A549 (cell line): ENCODE measurements at regions of chr17 and their contacts with region 1.

Region 1: DNA sequence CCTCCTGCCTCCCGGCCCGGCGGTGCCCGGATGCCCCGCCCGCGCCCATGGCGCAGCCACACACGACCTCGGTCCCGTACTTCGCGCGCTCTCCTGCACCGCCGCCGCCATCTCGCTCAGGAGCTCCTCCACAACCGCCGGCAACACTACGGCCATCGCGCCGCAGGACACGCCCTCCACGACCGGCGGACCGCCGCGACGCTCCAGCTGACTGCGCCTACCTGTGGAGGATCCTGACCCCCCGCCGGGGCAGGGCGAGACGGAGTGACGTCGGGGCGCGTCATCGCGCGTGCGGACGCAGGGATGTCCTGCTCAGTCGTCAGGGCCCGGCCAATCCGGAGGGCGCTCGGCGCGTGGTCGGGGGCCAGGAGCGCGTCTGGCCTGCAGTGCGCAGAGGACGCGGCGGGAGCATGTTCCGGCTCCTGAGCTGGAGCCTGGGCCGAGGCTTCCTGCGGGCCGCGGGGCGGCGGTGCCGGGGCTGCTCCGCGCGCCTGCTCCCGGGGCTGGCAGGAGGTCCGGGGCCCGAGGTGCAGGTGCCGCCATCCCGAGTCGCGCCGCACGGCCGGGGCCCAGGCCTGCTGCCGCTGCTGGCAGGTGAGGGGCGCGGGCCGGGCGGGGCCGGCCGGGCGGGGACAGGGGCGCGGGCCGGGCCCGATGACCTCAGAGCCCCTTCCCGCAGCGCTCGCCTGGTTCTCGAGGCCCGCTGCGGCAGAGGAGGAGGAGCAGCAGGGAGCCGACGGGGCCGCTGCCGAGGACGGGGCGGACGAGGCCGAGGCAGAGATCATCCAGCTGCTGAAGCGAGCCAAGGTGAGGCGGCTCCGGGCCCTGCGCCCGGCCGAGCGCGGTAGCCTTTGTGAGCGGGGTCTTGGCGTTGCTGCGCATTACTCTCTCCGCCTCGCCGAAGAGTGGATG is at the starts of genes TTC19 and ZSWIM7:
- DNase-seq: peak; percentile 99
- ATAC-seq: peak; percentile 94 to 97
- H3K4me3 ChIP-seq: peak within 1 kb of the TSS; percentile 95
- H3K27ac ChIP-seq: peak within 1 kb of the TSS; percentile 94 to 97
- H3K4me1 ChIP-seq: peaks cover 10% of the 10 kb centered on the region; the same call in 1 of the 3 replicates
- CTCF ChIP-seq: no peak
- EP300 ChIP-seq: no peak
- POLR2A ChIP-seq: peak; percentile 97
- RAD21 ChIP-seq: no peak; a peak in 2 of 5 replicates
- polyA plus RNA-seq, gene TTC19: 16.6 and 23.6 TPM in 2 replicates
- polyA plus RNA-seq, gene ZSWIM7: 65.5 and 72.7 TPM in 2 replicates

Region 2: GRCh38 chr17:15954222-15954621 is 45.5 kb before region 1 on chr17:
- CTCF ChIA-PET with region 1: interaction called, 105 read pairs
- POLR2A ChIA-PET with region 1: interaction called, 15 read pairs
- DNase-seq: peak; percentile 45 to 47
- ATAC-seq: peak in 1 of 2 experiments; percentile 23; a peak in 1 of 6 replicates
- H3K4me3 ChIP-seq: no peak overlapping the region
- H3K27ac ChIP-seq: peak overlapping the region in 1 of 2 experiments; percentile 44; a peak in 2 of 6 replicates
- H3K4me1 ChIP-seq: peaks cover 26% of the 10 kb centered on the region
- CTCF ChIP-seq: no peak
- EP300 ChIP-seq: no peak
- POLR2A ChIP-seq: no peak
- RAD21 ChIP-seq: no peak

Region 3: GRCh38 chr17:15966183-15966878 is 33.4 kb before region 1 on chr17:
- CTCF ChIA-PET with region 1: interaction called, 35 read pairs
- POLR2A ChIA-PET with region 1: interaction called, 3 read pairs
- DNase-seq: no peak
- ATAC-seq: peak in 1 of 2 experiments; percentile 72; a peak in 3 of 6 replicates
- H3K4me3 ChIP-seq: no peak overlapping the region
- H3K27ac ChIP-seq: peak overlapping the region; percentile 37 to 58; a peak in 5 of 6 replicates
- H3K4me1 ChIP-seq: peaks cover 50% of the 10 kb centered on the region
- CTCF ChIP-seq: no peak
- EP300 ChIP-seq: no peak
- POLR2A ChIP-seq: no peak
- RAD21 ChIP-seq: no peak

Region 4: DNA sequence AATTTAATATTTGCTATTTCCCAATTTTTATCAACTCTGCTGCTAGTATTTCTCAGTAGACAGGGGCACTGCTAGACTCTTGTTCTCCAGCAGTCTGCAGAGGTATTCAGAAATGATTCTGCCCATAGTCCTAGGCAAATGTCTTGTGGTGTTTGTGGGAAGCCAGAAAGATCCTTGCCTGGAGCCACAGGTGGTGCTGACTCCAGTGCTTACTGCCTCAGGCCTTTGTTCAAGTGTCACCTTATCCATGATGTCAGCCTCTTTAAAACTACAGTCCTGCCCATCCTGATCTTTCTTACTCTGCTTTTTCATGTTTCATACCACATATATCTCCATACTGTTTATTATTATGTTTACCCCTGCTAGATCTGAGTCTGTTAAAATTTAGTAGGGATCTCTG is 26.7 kb before region 1 on chr17:
- CTCF ChIA-PET with region 1: interaction called, 35 read pairs
- POLR2A ChIA-PET with region 1: no interaction called
- DNase-seq: no peak
- ATAC-seq: no peak
- H3K4me3 ChIP-seq: no peak overlapping the region
- H3K27ac ChIP-seq: no peak overlapping the region
- H3K4me1 ChIP-seq: no peaks in the 10 kb centered on the region
- CTCF ChIP-seq: no peak
- EP300 ChIP-seq: no peak
- POLR2A ChIP-seq: no peak
- RAD21 ChIP-seq: no peak

Region 5: GRCh38 chr17:16013943-16014407 is 14.3 kb after region 1 on chr17:
- CTCF ChIA-PET with region 1: interaction called, 46 read pairs
- POLR2A ChIA-PET with region 1: interaction called, 12 read pairs
- DNase-seq: peak; percentile 48 to 78
- ATAC-seq: peak; percentile 91 to 97
- H3K4me3 ChIP-seq: no peak overlapping the region
- H3K27ac ChIP-seq: no peak overlapping the region
- H3K4me1 ChIP-seq: peaks cover 28% of the 10 kb centered on the region
- CTCF ChIP-seq: peak; percentile 59
- EP300 ChIP-seq: no peak
- POLR2A ChIP-seq: no peak
- RAD21 ChIP-seq: peak; percentile 34 to 46; a peak in 2 of 5 replicates